MCF 10A (cell line): ENCODE measurements at regions of chr1 and their contacts with region 1.

Region 1: DNA sequence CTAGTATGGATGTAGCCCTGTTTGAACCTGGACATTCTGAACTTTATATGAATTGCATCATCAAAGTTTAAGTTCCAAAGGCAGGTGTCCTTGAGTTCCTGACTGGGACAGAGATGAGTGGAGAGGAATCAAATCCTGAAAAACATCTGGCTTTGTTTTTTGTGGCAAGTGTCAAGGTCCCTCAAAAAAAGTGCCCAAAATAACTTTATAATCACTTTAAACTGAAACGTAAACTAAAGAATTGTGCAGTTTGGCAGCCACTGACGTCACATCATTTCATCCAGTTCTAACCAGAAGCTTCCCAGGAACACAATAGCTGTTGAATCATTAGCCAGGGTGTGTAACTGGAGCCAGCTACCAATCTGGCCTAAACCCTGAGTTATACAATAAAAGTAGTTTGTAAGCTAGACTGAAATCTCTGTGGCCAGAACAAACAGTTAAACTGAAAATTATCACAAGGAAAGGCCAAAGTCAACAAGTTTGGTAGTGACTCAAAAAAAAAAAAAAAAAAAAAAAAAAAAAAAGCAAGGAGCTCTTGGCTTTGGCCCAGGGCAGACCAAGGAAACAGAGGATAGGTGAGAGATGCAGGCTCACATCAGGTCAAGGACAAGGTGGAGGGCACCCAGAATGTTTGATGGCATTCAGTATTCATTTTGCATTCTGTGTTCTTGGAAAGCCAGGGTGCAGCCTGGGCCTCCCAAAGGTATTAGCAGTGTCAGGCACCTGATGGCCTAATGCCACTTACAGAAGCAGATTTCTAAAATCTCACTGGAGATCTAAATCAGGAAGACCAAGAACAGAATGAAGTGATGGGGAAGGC is 74.3 kb downstream of the TNFSF18 start:
- DNase-seq: peak; percentile 98
- H3K4me3 Mint-ChIP-seq: no peak overlapping the region
- H3K27ac Mint-ChIP-seq: peak overlapping the region; percentile 88
- H3K4me1 Mint-ChIP-seq: peaks cover 47% of the 10 kb centered on the region
- H3K27me3 Mint-ChIP-seq: no peaks in the 10 kb centered on the region
- CTCF ChIP-seq: no peak

Region 2: GRCh38 chr1:172935062-172935592 is 41.3 kb before region 1 on chr1:
- CTCF ChIA-PET with region 1: interaction called, 3 read pairs
- POLR2A ChIA-PET with region 1: interaction called, 3 read pairs
- intact Hi-C with region 1: loop called (anchors 5 kb)
- DNase-seq: no peak
- H3K4me3 Mint-ChIP-seq: no peak overlapping the region
- H3K27ac Mint-ChIP-seq: peak overlapping the region; percentile 89
- H3K4me1 Mint-ChIP-seq: peaks cover 45% of the 10 kb centered on the region
- H3K27me3 Mint-ChIP-seq: no peaks in the 10 kb centered on the region
- CTCF ChIP-seq: no peak

Region 3: DNA sequence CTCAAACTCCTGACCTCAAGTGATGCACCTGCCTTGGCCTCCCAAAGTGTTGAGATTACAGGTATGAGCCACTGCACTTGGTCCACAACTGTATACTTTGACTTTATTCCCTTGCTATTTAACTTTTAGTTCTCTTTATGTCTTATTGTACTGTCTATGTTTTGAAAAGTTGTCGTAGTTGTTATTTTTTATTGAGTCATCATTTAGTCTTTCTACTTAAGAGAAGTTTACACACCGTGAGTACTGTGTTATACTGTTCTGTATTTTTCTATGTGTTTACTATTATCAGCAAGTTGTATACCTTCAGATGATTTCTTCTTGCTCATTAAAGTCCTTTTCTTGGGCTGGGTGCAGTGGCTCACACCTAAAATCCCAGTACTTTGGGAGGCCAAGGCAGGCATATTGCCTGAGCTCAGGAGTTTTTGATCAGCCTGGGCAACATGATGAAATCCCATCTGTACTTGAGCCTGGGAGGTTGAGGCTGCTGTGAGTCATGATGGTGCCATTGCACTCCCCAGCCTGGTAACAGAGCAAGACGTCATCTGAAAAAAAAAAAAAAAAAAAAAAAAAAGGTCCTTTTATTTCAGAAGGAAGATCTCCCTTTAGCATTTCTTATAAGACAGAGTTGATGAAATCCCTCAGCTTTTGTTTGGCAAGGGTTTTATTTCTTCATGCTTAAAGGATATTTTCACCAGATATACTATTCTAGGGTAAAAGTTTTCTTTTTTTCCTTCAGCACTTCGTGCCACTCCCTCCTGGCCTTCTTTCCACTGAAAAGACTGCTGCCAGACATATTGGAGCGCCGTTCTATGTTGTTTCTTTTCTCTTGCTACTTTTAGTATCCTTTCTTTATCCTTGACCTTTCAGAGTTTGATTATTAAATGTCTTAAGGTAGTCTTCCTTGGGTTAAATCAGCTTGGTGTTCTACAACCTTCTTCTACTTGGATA is 26.7 kb after region 1 on chr1:
- CTCF ChIA-PET with region 1: interaction called, 3 read pairs
- POLR2A ChIA-PET with region 1: interaction called, 10 read pairs
- intact Hi-C with region 1: loop called (anchors 1 kb)
- DNase-seq: peak; percentile 95
- H3K4me3 Mint-ChIP-seq: no peak overlapping the region
- H3K27ac Mint-ChIP-seq: peak overlapping the region; percentile 36
- H3K4me1 Mint-ChIP-seq: peaks cover 16% of the 10 kb centered on the region
- H3K27me3 Mint-ChIP-seq: no peaks in the 10 kb centered on the region
- CTCF ChIP-seq: no peak